ENCODE measurements at regions of chr5 and their contacts with region 1.

Region 1: DNA sequence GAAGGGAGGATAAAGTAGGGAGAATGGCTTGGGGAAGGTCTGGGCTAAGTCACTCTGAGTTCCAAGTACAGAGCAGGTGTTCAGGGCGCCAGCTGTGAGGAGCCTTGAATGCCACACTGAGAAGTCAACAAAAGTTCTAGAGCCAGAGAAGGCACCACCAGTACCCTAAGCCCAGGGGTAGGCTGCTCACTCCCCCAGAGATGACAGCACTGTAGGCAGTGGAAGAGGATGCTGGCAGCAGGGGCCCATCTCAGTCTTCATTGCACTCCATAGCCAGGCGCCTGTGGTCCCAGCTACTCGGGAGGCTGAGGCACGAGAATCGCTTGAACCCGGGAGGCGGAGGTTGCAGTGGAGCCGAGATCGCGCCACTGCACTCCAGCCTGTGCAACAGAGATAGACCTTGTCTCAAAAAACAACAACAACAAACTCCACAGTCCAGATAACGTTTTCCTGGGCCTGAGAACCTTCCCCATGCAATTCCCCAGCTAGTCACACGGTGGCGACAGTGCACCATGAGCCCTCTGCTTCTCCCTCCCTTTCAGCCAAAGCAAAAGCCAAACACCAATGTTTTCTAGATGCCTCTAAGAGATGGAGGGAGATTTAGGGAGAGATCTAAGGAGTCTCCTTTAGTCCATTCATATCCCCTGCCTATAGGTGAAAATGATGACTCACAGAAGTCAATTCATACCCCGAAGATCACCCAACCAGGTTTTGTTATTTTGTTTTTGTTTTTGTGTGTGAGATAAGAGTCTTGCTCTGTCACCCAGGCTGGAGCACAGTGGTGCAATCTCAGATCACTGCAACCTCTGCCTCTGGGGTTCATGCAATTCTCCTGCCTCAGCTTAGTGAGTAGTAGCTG is 19.8 kb upstream of the NSD1 start:
- H3K4me3 ChIP-seq: no peak overlapping the region
- H3K27ac ChIP-seq: no peak overlapping the region
- H3K4me1 ChIP-seq: no peaks in the 10 kb centered on the region
- CTCF ChIP-seq: peak; percentile 98

Region 2: GRCh38 chr5:177071666-177072385 is 42.0 kb before region 1 on chr5:
- CTCF ChIA-PET with region 1: interaction called, 151 read pairs
- POLR2A ChIA-PET with region 1: no interaction called
- H3K4me3 ChIP-seq: no peak overlapping the region
- H3K27ac ChIP-seq: no peak overlapping the region
- H3K4me1 ChIP-seq: no peaks in the 10 kb centered on the region
- CTCF ChIP-seq: peak; percentile 41; the same call in 1 of the 2 replicates

Region 3: DNA sequence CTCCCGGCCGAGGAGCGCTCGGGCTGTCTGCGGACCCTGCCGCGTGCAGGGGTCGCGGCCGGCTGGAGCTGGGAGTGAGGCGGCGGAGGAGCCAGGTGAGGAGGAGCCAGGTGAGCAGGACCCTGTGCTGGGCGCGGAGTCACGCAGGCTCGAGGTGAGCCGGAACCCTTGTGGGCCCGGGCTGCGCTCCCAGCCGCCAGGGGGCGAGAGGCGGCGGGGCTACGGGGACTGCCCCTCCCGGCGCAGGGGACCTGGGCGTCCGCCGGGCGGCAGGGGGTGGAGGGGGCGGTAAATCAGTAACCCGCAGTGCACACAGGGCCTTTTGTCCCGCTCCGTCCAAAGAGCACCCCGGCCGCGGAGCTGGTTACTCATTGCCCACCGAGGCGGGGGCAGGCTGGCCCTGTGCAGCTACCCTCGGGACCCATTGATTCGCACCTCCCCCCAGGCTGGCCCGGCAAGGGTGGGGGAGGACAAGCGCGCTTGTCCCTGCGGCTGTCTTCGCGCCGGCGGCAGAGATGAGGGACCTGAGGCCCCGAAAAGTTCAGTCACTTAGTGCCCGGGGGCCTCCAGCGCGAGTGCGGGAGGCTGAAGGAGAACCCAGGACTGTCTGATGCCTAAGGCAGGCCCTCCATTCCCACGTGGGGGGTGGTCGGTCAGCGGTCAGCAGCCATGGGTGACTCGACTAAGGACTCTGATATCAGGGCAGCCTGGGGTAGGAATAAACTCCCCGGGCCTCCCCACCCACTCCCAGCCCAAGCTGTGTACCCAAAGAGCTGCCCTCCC is 26.7 kb before region 1 on chr5:
- CTCF ChIA-PET with region 1: interaction called, 14 read pairs
- POLR2A ChIA-PET with region 1: interaction called, 3 read pairs
- H3K4me3 ChIP-seq: peak overlapping the region; percentile 47
- H3K27ac ChIP-seq: no peak overlapping the region
- H3K4me1 ChIP-seq: no peaks in the 10 kb centered on the region; the same call in 1 of the 2 replicates
- CTCF ChIP-seq: peak; percentile 95

Region 4: GRCh38 chr5:177126771-177127170 is 13.0 kb after region 1 on chr5:
- CTCF ChIA-PET with region 1: interaction called, 15 read pairs
- POLR2A ChIA-PET with region 1: no interaction called
- H3K4me3 ChIP-seq: no peak overlapping the region
- H3K27ac ChIP-seq: no peak overlapping the region
- H3K4me1 ChIP-seq: no peaks in the 10 kb centered on the region
- CTCF ChIP-seq: no peak

Region 5: GRCh38 chr5:177311723-177312648 is 198.2 kb after region 1 on chr5 and contains the start of gene MXD3:
- CTCF ChIA-PET with region 1: interaction called, 17 read pairs
- POLR2A ChIA-PET with region 1: no interaction called
- H3K4me3 ChIP-seq: peak within 1 kb of the TSS; percentile 86
- H3K27ac ChIP-seq: peak within 1 kb of the TSS; percentile 67
- H3K4me1 ChIP-seq: peaks cover 5% of the 10 kb centered on the region
- CTCF ChIP-seq: no peak

Measured in HEK293 (cell line).